Activated T-helper 1 cell treated with anti-CD3 and anti-CD28 coated beads, Interleukin-12 subunit alpha, Interleukin-12 subunit beta, Interleukin-2, Interleukin-4 antibody, amounts not matched to agents 30 ng/mL and 10 ng/mL and 1 ng/mL, durations not matched to agents 14 hours and 24 hours and 36 hours (primary cell): ENCODE measurements at regions of chr1 and their contacts with region 1.

Region 1: DNA sequence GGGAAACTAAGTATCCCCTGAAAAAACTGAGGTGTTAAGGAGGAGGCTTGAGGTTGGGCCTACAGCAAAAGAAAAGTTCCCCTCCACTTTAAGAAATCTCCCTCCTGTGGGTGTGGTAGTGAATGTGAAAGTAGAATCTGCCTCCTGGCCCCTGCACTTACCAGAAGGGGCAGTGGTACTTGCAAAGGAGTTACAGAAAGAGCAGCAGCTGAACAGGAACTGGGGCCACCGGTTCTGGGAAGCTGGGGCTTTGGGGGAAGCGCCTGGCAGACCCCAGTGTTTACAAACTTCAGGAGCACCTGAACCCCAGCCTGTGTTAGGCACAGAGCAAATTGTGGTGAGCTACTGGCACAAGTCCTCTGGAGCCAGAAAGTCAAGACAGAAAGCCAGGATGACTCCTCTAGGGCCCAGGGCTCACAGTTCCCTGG is 250.2 kb upstream of the FGGY start:
- DNase-seq: peak; percentile 62
- H3K4me3 Mint-ChIP-seq: peak overlapping the region; percentile 67
- H3K27ac Mint-ChIP-seq: peak overlapping the region; percentile 71
- H3K4me1 Mint-ChIP-seq: peaks cover 77% of the 10 kb centered on the region
- H3K27me3 Mint-ChIP-seq: no peaks in the 10 kb centered on the region

Region 2: DNA sequence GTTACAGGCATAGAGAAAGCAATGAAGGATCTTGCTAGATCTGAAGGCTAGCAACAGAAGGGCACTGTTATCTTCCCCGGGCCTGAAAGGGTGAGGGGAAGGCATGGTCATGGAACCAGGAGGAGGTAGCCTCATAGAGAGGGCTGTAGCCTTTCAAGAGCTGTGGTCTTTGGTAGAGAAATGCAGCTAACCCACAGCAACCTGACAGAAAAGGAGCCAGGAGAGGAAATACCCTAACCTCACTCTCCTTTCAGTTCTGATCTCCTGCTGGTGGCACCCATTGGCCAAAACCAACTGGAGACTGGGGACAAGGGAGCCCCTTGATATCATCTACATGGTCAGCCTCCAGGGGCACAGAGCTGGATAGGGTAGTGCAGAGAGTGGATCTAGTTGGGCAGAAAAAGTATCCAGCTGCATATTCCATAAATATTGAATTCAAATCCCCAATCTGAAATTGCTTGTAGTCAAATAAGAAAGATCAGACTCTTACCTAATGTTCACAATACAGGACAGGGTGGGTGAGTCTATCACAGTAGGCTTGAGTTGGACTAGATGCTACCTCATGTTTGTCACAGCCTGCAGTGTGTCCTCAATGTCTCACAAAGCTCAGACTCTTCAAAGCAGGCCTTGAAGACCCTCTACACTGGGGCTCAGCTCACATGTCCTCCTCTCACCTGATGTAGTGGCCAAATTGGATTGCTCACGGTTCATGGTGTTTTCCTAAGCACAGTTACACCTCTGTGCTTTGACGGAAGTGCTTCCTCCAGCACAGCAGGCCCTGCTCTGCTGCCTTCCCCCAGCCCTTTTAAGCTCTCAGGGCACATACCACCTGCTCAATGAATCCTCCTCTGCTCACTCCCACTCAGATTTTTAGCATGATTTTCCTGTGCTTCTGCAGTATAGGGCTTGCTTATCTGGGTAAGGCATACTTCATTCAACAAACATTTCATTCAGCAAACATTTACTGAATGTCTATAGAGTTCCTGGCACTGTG is 188.8 kb before region 1 on chr1:
- intact Hi-C with region 1: loop called (anchors 2 kb)
- DNase-seq: peak; percentile 43
- H3K4me3 Mint-ChIP-seq: peak overlapping the region; percentile 61
- H3K27ac Mint-ChIP-seq: peak overlapping the region; percentile 95
- H3K4me1 Mint-ChIP-seq: peaks cover 74% of the 10 kb centered on the region
- H3K27me3 Mint-ChIP-seq: no peaks in the 10 kb centered on the region

Region 3: DNA sequence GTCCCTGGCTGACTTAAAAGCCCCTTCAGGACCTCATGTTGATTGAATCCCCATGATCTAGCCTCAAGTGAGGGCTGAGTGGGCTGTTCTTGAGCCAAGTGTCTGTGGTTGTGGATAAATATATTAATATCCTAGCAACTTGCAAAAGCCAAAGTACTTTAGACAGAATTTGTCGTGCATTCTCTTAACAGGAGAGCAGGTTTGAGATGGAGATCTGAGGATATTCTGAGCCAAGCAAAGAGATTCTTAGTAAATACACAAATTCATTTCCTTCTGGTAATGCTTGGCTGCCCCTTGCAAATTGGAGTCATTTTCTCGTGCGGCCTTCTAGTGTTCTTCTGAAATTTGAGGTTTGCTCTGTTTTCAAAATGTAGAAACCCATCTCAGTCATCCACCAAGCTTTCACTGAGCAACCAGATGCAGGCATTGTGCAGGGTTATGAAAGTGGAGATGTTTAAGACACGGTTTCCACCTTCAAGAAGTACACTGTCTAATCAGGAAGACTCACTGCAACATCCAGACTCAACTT is 20.8 kb before region 1 on chr1:
- intact Hi-C with region 1: loop called (anchors 1 kb)
- DNase-seq: no peak
- H3K4me3 Mint-ChIP-seq: no peak overlapping the region
- H3K27ac Mint-ChIP-seq: no peak overlapping the region
- H3K4me1 Mint-ChIP-seq: peaks cover 17% of the 10 kb centered on the region
- H3K27me3 Mint-ChIP-seq: no peaks in the 10 kb centered on the region

Region 4: GRCh38 chr1:59071289-59071688 is 24.5 kb after region 1 on chr1:
- intact Hi-C with region 1: loop called (anchors 2 kb)
- DNase-seq: no peak
- H3K4me3 Mint-ChIP-seq: peak overlapping the region; percentile 44
- H3K27ac Mint-ChIP-seq: peak overlapping the region; percentile 83
- H3K4me1 Mint-ChIP-seq: peaks cover 36% of the 10 kb centered on the region
- H3K27me3 Mint-ChIP-seq: no peaks in the 10 kb centered on the region

Region 5: GRCh38 chr1:59272507-59272906 is 225.8 kb after region 1 on chr1:
- intact Hi-C with region 1: no loop called
- DNase-seq: no peak
- H3K4me3 Mint-ChIP-seq: no peak overlapping the region
- H3K27ac Mint-ChIP-seq: peak overlapping the region; percentile 42
- H3K4me1 Mint-ChIP-seq: peaks cover 33% of the 10 kb centered on the region
- H3K27me3 Mint-ChIP-seq: peaks cover 18% of the 10 kb centered on the region